ENCODE measurements at regions of chr18 and their contacts with region 1.

Region 1: DNA sequence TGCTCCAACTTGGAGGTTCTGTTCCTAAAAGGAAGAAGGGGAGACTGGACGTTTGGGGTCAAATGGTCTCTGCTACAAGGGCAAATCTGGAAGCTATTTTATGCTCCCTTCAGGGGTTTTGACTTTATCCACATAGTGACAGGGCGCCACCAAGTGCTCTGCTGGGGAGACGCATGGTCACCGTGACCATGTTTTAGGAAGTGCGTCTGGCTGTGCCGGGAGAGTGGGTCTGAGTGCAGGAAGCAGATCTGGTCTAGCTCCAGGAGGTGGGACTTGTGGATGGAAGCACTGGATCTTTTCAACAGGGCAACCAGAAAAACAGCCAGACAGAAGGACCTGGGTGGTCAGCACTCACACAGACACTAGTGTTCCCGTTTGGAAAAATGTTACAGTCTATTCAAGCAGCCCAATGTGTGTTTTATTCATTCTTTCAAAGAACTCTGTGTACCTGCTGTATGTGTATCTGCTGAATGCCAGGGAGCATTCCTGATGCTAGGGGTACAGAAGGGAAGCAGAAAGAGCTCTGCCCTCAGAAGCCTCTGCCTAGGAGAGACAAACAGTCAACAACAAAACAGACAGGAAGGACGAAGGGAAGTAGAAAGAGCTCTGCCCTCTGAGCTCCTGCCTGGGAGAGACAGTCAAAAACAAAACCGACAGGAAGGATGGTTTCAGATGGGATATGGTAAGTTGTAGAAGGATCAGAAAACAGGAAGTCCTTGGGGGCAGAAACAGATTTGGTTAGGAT is 14.3 kb downstream of the IMPA2 start:
- DNase-seq: peak; percentile 53 to 77 (median 66)
- H3K4me3 ChIP-seq: no peak overlapping the region
- H3K27ac ChIP-seq: peak overlapping the region in 1 of 2 donors; percentile 15
- H3K4me1 ChIP-seq: peaks cover 7% of the 10 kb centered on the region
- H3K27me3 ChIP-seq: no peaks in the 10 kb centered on the region
- CTCF ChIP-seq: peak; percentile 21 to 49 (median 45)
- EP300 ChIP-seq: no peak
- POLR2A ChIP-seq: no peak

Region 2: GRCh38 chr18:11937874-11938478 is 57.6 kb before region 1 on chr18:
- intact Hi-C with region 1: loop called in 3 of 4 experiments (anchors 5 to 10 kb)
- DNase-seq: peak; percentile 61 to 81 (median 79)
- H3K4me3 ChIP-seq: no peak overlapping the region
- H3K27ac ChIP-seq: no peak overlapping the region
- H3K4me1 ChIP-seq: no peaks in the 10 kb centered on the region
- H3K27me3 ChIP-seq: no peaks in the 10 kb centered on the region
- CTCF ChIP-seq: peak; percentile 70 to 86 (median 83)
- EP300 ChIP-seq: no peak
- POLR2A ChIP-seq: no peak

Region 3: DNA sequence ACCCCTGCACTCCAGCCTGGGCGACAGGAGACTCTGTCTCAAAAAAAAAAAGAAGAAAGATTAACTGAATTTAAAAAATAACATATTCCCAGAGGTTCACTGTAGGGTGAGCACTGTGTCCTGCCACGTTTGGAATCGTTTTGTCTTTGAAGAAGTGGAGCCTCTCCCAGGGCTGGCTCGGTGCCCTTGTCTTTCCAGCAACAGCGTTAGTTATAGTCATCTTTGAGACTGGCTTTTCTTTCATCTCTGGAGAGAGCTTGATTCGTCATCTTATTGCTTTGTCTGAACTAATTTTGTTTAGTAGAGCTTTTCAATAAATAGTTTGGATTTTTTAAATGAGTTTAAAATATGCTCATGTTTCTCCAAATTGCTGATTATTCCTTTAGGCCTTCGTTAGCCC is 36.2 kb after region 1 on chr18:
- intact Hi-C with region 1: loop called in 2 of 4 experiments (anchors 5 kb)
- DNase-seq: peak; percentile 80 to 90 (median 83)
- H3K4me3 ChIP-seq: no peak overlapping the region
- H3K27ac ChIP-seq: peak overlapping the region in 1 of 2 donors; percentile 17
- H3K4me1 ChIP-seq: peaks cover 2% of the 10 kb centered on the region
- H3K27me3 ChIP-seq: no peaks in the 10 kb centered on the region
- CTCF ChIP-seq: no peak
- EP300 ChIP-seq: no peak
- POLR2A ChIP-seq: no peak